PC-3 (cell line): ENCODE measurements at regions of chr7 and their contacts with region 1.

Region 1: DNA sequence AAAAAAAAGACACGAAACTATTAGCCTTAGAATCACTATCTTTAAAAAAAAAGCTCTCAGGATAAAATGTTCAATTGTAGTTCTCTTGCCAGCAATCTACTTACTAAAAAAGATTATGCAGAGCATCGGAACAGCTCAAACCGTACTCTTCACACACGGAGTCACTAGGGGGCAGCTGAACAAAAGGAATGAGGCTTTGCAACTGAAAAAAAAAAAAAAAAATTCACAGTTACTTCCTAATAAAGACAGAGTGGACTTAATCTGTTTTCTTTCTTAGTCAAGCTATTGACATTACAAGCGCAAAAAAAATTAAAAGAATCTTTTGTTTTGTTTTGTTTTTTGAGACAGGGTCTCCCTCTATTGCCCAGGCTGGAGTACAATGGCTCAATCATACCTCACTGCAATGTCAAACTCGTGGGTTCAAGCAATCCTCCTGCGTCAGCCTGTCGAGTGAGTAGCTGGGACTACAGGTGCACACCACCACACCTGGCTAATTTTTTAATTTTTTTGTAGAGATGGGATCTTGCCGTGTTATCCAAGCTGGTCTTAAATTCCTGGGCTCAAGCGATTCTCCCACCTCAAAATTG is 11.5 kb downstream of the PMS2 start:
- DNase-seq: peak; percentile 72
- ATAC-seq: peak; percentile 69
- H3K4me3 ChIP-seq: no peak overlapping the region
- H3K27ac ChIP-seq: no peak overlapping the region
- H3K4me1 ChIP-seq: peaks cover 13% of the 10 kb centered on the region
- H3K27me3 ChIP-seq: no peaks in the 10 kb centered on the region
- CTCF ChIP-seq: peak; percentile 81

Region 2: GRCh38 chr7:6012355-6013104 is 15.2 kb after region 1 on chr7:
- CTCF ChIA-PET with region 1: interaction called, 11 read pairs
- POLR2A ChIA-PET with region 1: no interaction called
- intact Hi-C with region 1: no loop called
- DNase-seq: no peak
- ATAC-seq: no peak
- H3K4me3 ChIP-seq: no peak overlapping the region
- H3K27ac ChIP-seq: no peak overlapping the region
- H3K4me1 ChIP-seq: peaks cover 4% of the 10 kb centered on the region; the same call in 1 of the 2 replicates
- H3K27me3 ChIP-seq: no peaks in the 10 kb centered on the region
- CTCF ChIP-seq: no peak

Region 3: DNA sequence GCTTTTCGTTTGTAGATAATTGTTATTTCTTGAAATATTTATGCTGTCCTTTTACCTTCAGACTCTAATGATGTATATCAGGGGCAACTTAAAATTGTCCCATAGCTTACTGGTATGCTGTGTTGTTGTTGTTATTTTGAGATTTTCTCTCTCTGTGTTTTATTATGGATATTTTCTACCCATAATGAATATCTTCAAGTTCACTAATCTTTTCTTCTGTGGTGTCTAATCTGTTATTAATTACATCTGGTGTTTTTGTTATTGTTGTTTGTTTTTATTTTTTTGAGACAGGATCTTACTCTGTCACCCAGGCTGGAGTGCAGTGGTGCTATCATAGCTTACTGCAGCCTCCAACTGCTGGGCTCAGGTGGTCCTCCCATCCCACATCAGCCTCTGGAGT is 135.9 kb after region 1 on chr7:
- CTCF ChIA-PET with region 1: no interaction called
- POLR2A ChIA-PET with region 1: no interaction called
- intact Hi-C with region 1: no loop called
- DNase-seq: no peak
- ATAC-seq: no peak
- H3K4me3 ChIP-seq: no peak overlapping the region
- H3K27ac ChIP-seq: no peak overlapping the region
- H3K4me1 ChIP-seq: no peaks in the 10 kb centered on the region
- H3K27me3 ChIP-seq: no peaks in the 10 kb centered on the region
- CTCF ChIP-seq: no peak

Region 4: GRCh38 chr7:7164591-7164990 is 1167.3 kb after region 1 on chr7:
- CTCF ChIA-PET with region 1: no interaction called
- POLR2A ChIA-PET with region 1: no interaction called
- intact Hi-C with region 1: no loop called
- DNase-seq: no peak
- ATAC-seq: no peak
- H3K4me3 ChIP-seq: no peak overlapping the region
- H3K27ac ChIP-seq: no peak overlapping the region
- H3K4me1 ChIP-seq: no peaks in the 10 kb centered on the region
- H3K27me3 ChIP-seq: no peaks in the 10 kb centered on the region
- CTCF ChIP-seq: no peak